Ascending aorta (tissue), 2 donors: ENCODE measurements at regions of chr15 and their contacts with region 1.

Region 1: DNA sequence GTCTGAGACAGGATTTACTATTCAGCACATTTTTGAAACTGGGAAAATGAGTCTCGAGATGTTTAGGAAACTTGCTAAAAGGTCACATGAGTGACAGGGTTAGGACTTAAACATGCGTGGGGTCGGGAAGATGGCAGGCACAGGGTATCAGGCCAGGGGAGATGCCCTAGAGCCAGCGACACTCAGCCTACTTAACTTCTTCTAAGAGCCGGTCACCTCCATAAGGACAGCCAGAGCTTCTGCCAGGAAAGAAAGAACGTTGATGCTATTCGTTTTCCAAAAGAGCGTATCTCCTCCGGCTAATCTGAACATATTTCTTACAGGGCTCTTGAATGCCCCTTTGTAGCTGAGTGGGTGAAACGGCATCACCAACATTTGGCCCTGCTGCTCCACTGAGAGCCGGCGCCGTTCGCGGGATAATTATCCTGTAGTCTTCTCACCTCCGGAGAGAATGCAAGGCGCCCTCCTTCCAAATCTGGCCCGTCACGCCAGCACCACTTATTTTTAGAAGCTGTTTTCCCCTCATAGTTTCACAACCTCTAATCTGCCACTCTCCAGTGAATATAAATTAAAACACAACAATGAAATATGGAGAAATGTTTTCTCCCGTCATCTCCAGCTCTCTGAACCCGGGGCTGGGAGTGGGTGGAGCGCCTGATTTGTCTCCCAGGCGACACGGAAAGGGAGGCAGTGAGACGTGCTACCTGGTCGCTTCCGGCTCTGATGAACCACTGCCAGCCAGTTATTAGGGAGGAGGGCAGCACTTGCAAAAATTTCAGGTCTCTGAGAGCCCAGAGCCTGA is 58.5 kb downstream of the LIPC start:
- DNase-seq: no peak
- H3K4me3 ChIP-seq: peak overlapping the region; percentile 12 to 22
- H3K27ac ChIP-seq: peak overlapping the region; percentile 84 to 90
- H3K4me1 ChIP-seq: peaks cover 3 to 19% of the 10 kb centered on the region in 2 donors
- H3K27me3 ChIP-seq: no peaks in the 10 kb centered on the region
- CTCF ChIP-seq: no peak

Region 2: DNA sequence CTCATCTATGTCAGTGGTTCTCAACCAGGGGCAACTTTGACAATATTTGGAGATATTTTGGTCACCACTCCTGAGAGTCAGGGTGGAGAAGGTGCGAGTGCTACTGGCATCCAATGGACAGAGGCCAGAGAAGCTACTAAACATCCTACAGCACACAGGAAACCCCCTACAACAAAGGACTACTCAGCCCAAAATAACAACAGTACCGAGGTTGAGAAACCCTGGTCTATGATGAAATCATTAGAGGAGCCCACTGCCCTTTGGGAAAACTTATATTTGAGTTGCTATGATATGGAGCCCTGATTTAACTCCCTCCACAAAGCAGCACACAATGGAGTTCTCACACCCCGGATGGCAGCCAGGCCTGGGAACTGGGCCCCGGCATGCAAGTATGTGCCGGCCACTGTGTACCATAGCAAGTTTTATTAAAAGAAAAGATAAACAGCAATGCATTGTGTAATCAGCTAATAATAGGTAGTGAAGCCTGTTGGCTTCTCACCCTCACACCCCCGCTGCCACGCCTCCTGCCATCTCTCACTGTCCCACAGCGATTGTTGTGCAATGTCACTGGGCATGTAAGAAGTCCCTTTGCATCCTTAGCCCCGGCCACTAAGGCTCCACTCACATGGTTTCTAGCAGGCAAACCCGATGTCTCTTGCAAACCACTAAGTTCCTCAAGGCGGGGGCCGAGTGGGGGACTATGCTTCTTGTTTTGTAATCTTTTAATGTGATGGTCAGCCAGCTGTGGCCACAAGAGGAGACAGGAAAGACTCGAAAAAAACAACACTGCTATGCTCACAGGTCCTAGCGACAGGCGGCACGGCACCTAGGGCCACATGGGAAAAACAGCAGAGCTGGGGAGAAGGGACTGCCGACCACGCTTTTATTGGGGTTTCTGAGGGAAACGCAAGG is 242.2 kb before region 1 on chr15:
- intact Hi-C with region 1: loop called (anchors 2 kb)
- DNase-seq: peak; percentile 79 to 91
- H3K4me3 ChIP-seq: no peak overlapping the region
- H3K27ac ChIP-seq: peak overlapping the region; percentile 49 to 61
- H3K4me1 ChIP-seq: peaks cover 3 to 6% of the 10 kb centered on the region in 2 donors
- H3K27me3 ChIP-seq: no peaks in the 10 kb centered on the region
- CTCF ChIP-seq: no peak

Region 3: DNA sequence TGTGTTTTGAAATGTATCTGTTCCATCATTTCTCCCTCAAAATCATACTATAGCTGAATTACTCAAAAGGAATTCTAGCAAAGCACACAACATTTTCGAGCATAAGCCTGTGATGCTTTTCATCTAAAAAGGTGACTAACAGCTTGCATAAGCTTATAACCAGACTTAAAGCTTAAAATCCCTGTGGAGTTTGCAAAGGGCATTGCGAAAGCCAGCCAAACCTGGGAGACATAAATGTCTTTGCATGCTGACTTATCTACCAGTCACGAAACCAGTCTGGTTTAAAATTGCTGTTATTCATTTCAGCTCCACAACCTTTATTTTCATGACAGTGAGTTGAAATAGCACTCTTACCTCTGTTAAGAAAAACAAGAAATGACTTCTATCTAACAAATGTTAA is 94.1 kb before region 1 on chr15:
- intact Hi-C with region 1: no loop called
- DNase-seq: no peak
- H3K4me3 ChIP-seq: no peak overlapping the region
- H3K27ac ChIP-seq: no peak overlapping the region
- H3K4me1 ChIP-seq: no peaks in the 10 kb centered on the region
- H3K27me3 ChIP-seq: no peaks in the 10 kb centered on the region
- CTCF ChIP-seq: no peak

Region 4: GRCh38 chr15:58440158-58440910 is 50.0 kb before region 1 on chr15:
- intact Hi-C with region 1: loop called (anchors 2 kb)
- DNase-seq: peak in 1 of 2 donors; percentile 65
- H3K4me3 ChIP-seq: no peak overlapping the region
- H3K27ac ChIP-seq: peak overlapping the region; percentile 61 to 68
- H3K4me1 ChIP-seq: peaks cover 6 to 18% of the 10 kb centered on the region in 2 donors
- H3K27me3 ChIP-seq: no peaks in the 10 kb centered on the region
- CTCF ChIP-seq: no peak

Region 5: DNA sequence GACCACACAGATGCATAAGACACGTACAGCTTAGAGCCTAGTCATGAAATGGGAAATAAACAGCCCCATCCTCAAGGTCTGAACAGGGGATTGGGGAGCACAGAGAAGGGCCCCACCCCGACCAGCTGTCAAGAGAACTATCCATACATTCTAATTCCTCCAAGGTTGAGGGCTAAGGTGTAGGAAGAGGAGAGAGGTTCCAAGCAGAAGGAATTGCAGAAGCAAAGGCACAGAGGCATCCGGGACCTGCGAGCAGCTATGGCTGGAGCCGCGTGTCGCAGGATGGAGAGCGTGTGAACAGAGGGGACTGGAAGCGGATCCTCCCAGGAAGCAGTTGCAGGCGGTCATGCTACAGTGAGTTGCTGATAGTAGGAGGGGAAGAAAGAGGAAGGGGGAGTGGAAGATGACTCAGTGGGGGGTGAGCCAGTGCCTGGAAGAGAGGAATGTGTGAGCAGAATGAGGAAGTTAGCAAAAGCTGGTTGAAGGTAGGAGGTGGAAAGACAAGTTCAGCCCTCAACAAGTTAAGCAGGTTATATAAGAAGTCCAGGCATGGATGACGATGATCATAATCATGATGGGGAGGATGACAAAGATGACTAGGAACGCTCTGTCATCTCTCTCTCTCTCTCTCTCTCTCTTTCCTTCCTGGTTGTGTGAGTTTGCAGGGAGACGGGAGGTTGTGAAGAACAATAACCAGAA is 31.2 kb after region 1 on chr15:
- intact Hi-C with region 1: loop called (anchors 2 kb)
- DNase-seq: peak; percentile 26 to 75
- H3K4me3 ChIP-seq: no peak overlapping the region
- H3K27ac ChIP-seq: peak overlapping the region; percentile 70 to 78
- H3K4me1 ChIP-seq: peaks cover 18 to 46% of the 10 kb centered on the region in 2 donors
- H3K27me3 ChIP-seq: no peaks in the 10 kb centered on the region
- CTCF ChIP-seq: no peak

Region 6: DNA sequence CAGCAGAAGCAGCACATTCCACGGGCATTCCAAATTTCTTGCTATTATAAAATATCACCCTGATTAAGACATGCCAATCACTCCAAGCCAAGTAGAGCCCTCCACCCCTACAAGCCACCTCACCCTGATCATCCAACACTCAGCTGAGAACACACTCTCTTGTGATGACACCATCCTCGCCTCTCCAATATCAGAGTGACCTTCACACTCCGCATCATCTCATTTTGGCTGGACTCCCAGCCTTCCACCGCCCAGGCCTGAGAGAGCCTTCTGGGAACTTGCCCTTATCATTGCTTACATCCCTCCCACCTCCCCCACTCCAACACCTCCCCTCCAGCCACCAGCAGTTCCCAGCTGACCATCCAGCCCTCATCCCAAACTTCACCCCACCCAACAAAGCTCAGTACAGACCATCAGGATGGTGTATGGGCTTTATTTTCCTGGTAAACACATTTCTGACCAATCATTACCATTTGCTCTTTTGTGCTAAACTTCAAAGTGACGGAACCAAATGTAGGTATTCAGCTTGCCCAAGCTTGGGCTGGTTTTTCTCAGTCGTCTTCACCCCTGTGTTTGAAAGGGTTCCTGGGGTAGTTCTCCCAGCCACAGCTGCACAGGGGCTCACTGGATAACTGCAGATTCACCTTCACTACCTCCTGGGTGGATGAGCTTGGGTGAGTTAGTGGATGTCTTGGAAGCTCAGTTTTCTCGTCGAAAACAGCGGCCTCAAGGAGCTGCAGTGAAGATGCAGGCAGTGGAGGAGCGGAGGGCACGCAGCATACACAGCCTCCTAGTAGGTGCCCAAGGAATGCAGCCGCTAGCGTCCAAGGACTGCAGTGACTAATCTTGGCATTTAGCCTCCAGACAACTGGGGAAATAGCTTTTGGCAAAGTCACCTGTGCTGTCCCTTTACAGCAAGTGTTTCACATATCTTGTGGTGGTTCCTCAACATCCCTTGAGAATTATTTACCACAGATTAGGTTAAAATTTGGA is 56.6 kb after region 1 on chr15:
- intact Hi-C with region 1: loop called (anchors 5 kb)
- DNase-seq: peak in 1 of 2 donors; percentile 88
- H3K4me3 ChIP-seq: no peak overlapping the region
- H3K27ac ChIP-seq: peak overlapping the region; percentile 29 to 44
- H3K4me1 ChIP-seq: peaks cover 0 to 10% of the 10 kb centered on the region in 2 donors
- H3K27me3 ChIP-seq: no peaks in the 10 kb centered on the region
- CTCF ChIP-seq: no peak

Region 7: DNA sequence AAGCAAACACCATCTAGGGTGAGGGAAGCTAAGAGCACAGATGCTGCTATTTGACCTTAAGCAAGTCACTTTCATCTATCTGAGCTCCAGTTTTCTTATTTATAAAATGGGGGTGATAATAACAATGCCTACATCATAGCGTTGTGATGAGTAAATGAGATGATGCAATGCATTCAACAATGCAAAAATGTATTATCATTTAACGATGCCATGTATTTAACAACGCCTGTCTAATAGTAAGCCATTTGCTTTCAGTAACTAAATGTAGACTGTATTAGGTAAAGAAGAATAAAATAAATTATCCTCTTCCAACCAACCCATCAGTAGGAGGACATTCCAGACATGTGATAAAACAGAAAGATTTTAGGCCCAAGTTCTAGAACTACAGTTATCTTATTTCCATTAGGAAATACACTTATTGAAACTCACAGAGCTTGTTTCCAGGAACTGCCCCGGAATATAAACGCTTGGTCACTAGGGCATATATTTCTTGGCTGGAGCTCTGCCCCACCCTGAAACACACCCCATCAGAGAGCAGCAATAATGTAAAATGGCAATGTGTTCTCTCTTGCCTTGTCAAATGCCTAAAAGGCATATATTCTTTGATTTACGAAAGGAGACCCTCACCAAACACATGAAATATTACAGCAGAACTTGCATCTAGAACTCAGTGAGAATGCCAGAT is 69.8 kb after region 1 on chr15:
- intact Hi-C with region 1: no loop called
- DNase-seq: no peak
- H3K4me3 ChIP-seq: no peak overlapping the region
- H3K27ac ChIP-seq: no peak overlapping the region
- H3K4me1 ChIP-seq: no peaks in the 10 kb centered on the region
- H3K27me3 ChIP-seq: no peaks in the 10 kb centered on the region
- CTCF ChIP-seq: no peak

Region 8: GRCh38 chr15:58608129-58608590 is 117.9 kb after region 1 on chr15:
- intact Hi-C with region 1: no loop called
- DNase-seq: no peak
- H3K4me3 ChIP-seq: no peak overlapping the region
- H3K27ac ChIP-seq: no peak overlapping the region
- H3K4me1 ChIP-seq: no peaks in the 10 kb centered on the region
- H3K27me3 ChIP-seq: no peaks in the 10 kb centered on the region
- CTCF ChIP-seq: no peak